Heart left ventricle (tissue), 16 donors: ENCODE measurements at regions of chr16 and their contacts with region 1.

Region 1: DNA sequence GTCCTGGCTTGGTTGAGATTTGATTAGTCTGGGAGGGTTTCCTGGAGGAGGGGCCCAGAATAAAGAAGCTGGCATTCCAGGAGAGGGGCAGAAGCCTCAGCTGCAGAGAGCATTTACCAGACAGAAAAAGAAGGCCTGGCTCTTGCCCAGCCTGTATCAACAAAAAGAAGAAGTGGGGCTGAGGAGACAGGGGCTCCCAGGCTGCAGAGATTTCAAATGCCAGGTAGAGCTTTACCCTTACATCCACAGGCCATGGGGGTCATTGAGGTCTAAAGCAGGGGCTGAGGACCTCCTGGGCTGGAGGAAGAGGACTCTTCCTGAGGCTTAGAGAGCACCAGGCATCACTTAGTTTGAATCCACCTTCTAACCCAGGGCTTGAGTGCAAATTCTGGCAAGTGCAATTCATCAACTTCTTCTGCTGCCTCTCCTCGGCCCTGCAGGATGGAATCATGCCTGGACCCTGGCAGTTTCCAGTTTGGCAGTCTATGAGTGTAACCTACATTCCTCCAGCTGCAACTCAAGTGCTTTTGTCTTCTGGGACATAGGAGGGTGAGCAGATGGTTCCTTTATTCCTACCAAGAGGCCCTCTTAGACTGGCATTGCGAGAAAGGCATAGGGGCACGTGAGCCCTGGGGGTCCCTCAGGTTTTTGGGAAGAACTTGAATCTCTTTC is 15.3 kb downstream of the CA7 start:
- DNase-seq: no peak
- ATAC-seq: peak in 1 of 4 donors; percentile 14
- H3K4me3 ChIP-seq: no peak overlapping the region
- H3K27ac ChIP-seq: no peak overlapping the region
- H3K4me1 ChIP-seq: peaks cover 0 to 8% (median 0%) of the 10 kb centered on the region in 12 donors
- H3K27me3 ChIP-seq: no peaks in the 10 kb centered on the region
- CTCF ChIP-seq: no peak
- POLR2A ChIP-seq: no peak

Region 2: GRCh38 chr16:66416939-66417700 is 442.4 kb before region 1 on chr16:
- intact Hi-C with region 1: loop called in 1 of 10 experiments (anchors 10 kb)
- DNase-seq: no peak
- ATAC-seq: no peak
- H3K4me3 ChIP-seq: no peak overlapping the region
- H3K27ac ChIP-seq: peak overlapping the region in 1 of 12 donors; percentile 51
- H3K4me1 ChIP-seq: peaks cover 0 to 9% (median 0%) of the 10 kb centered on the region in 12 donors
- H3K27me3 ChIP-seq: no peaks in the 10 kb centered on the region
- CTCF ChIP-seq: no peak
- POLR2A ChIP-seq: no peak

Region 3: GRCh38 chr16:66740010-66740409 is 119.5 kb before region 1 on chr16:
- intact Hi-C with region 1: loop called in 1 of 10 experiments (anchors 10 kb)
- DNase-seq: no peak
- ATAC-seq: no peak
- H3K4me3 ChIP-seq: no peak overlapping the region
- H3K27ac ChIP-seq: peak overlapping the region; percentile 42 to 94 (median 86)
- H3K4me1 ChIP-seq: peaks cover 13 to 64% (median 39%) of the 10 kb centered on the region in 12 donors
- H3K27me3 ChIP-seq: no peaks in the 10 kb centered on the region
- CTCF ChIP-seq: peak; percentile 35 to 67 (median 50)
- POLR2A ChIP-seq: no peak